WTC11 (cell line): ENCODE measurements at regions of chr14 and their contacts with region 1.

Region 1: DNA sequence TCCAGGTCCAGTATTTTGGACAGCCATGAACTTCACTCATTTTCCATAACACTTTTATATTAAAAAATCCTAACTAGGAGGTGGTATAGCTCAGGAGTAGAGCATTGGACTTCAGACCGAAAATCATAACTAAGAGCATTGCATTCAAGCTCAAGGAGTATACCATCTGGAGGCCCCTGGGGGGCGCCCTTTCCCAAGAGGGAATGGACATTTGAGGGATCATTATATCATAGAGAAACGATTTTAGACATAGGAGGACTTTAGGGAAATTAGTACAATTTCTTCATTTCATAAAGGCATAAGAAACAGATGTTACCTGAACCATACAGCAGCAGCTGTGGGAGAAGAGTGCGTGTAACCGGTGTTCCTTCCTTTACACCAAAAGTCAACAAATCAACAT is 5.2 kb upstream of the ATG14 start:
- DNase-seq: peak; percentile 50
- ATAC-seq: peak; percentile 85
- H3K4me3 Mint-ChIP-seq: no peak overlapping the region
- H3K27ac Mint-ChIP-seq: no peak overlapping the region
- H3K4me1 Mint-ChIP-seq: peaks cover 9% of the 10 kb centered on the region
- H3K27me3 Mint-ChIP-seq: peaks cover 5% of the 10 kb centered on the region; the same call in 1 of the 2 replicates
- CTCF ChIP-seq: peak; percentile 79

Region 2: DNA sequence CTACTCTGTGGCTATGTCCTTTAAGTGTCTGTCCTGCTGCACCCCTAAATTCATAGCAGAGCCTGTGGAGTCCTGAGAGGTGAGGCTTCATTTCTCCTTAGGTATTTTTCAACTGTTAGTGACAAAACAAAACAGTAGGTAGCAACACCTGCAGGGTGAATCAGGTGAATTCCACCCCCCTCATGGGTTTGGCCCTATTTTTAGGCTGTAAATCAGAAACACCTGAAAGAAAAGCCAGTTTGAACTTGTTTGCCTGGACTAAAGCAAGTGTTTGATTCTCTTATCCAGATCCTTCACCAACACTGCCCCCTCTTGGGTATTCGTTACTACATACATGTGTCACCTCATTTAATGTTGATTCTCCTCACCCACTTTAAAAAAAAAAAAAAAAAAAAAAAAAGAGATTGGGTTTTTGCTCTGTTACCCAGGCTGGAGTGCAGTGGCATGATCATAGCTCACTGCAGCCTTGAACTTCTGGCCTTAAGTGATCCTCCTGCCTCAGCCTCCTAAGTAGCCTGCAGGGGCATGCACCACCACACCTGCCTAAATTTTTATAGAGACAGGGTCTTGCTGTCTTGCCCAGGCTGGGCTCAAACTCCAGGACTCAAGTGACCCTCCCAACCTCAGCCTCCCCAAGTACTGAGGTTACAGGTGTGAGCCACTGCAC is 13.3 kb after region 1 on chr14:
- CTCF ChIA-PET with region 1: interaction called, 41 read pairs
- POLR2A ChIA-PET with region 1: no interaction called
- DNase-seq: no peak
- ATAC-seq: peak; percentile 81
- H3K4me3 Mint-ChIP-seq: no peak overlapping the region
- H3K27ac Mint-ChIP-seq: peak overlapping the region; percentile 95
- H3K4me1 Mint-ChIP-seq: peaks cover 15% of the 10 kb centered on the region
- H3K27me3 Mint-ChIP-seq: no peaks in the 10 kb centered on the region
- CTCF ChIP-seq: 0 out of 2 replicates have a peak, but pooled peaks have one; percentile 16